ENCODE measurements at regions of chr14 and their contacts with region 1.

Region 1: DNA sequence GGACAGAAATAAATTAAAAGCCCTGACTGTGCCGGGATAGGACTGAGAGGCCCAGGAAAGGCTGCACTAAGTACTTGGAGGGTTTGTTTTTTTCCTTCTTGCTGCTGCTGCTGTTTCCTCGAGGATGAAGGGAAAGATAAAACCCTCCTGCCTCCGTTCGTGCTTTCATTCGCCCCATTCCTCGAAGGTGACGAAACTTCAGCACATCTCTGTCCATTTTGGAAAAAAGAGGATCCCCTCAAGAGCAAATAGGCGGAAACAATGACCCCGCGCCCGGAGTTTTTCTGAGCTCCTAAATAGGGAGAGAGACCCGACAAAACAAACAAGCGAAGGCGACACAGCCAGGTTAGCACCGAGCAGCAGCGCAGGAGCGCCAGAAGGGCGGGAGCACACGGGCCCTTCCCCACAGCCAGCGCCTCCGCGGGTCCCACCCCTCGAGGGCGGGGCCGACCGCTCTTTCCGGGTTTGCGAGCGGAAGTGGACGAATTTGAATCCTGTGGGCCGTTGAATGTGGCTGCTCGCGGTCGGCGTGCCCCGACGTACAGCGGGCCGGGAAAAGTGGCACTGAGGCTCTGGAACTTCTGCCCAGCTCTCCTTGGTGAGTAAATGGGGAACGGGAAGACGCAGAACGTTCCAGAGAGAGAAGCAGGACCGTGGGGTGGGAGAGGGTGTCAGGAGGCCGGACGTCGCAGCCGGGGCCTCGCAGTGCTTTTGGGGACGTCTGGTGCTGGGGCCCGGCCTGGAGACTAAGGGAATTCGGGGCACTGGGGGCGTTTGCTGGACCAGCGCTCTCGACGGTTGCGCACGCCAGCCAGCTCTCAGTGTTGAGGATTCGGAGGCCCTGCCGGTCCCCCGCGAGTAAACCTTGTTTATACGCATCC is at the start of gene G2E3:
- DNase-seq: peak; percentile 63 to 73
- ATAC-seq: peak; percentile 96 to 99
- H3K4me3 ChIP-seq: peak within 1 kb of the TSS; percentile 72 to 89 (median 82)
- H3K27ac ChIP-seq: peak within 1 kb of the TSS; percentile 63 to 81 (median 78)
- H3K4me1 ChIP-seq: peaks cover 14 to 17% of the 10 kb centered on the region in 2 donors
- H3K27me3 ChIP-seq: no peaks in the 10 kb centered on the region
- CTCF ChIP-seq: no peak
- POLR2A ChIP-seq: peak; percentile 41 to 49
- total RNA-seq, gene G2E3: 3.3 to 5.4 (median 4.4) TPM

Region 2: GRCh38 chr14:30597504-30597903 is 38.6 kb after region 1 on chr14:
- in situ Hi-C with region 1: no loop called
- intact Hi-C with region 1: no loop called
- DNase-seq: no peak
- ATAC-seq: no peak
- H3K4me3 ChIP-seq: no peak overlapping the region
- H3K27ac ChIP-seq: no peak overlapping the region
- H3K4me1 ChIP-seq: peaks cover 14 to 20% of the 10 kb centered on the region in 2 donors
- H3K27me3 ChIP-seq: no peaks in the 10 kb centered on the region
- CTCF ChIP-seq: no peak
- POLR2A ChIP-seq: no peak

Region 3: DNA sequence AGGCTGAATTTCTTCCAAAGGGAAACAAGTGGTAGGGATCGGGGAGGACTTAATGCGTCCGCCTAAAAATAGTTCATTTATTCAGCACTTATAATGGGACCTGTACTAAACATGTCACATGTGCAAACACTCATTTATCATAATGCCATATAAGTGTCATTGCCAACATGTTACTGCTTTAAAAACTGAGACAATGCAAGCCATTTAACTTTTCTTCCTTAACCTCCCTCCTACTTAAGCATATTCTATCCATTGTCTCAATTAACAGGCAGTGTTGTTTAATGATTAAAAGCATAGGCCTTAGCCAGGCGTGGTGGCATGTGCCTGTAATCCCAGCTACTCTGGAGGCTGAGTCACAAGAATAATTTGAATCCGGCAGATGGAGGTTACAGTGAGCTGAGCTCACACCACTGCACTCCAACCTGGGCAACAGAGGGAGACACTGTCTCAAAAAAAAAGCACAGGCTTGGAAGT is 49.7 kb after region 1 on chr14:
- in situ Hi-C with region 1: no loop called
- intact Hi-C with region 1: loop called (anchors 2 kb)
- DNase-seq: peak; percentile 13 to 44
- ATAC-seq: peak; percentile 96 to 97
- H3K4me3 ChIP-seq: no peak overlapping the region
- H3K27ac ChIP-seq: peak overlapping the region; percentile 65 to 77 (median 74)
- H3K4me1 ChIP-seq: peaks cover 3 to 16% of the 10 kb centered on the region in 2 donors
- H3K27me3 ChIP-seq: no peaks in the 10 kb centered on the region
- CTCF ChIP-seq: peak in 1 of 5 experiments; percentile 17
- POLR2A ChIP-seq: no peak

Region 4: DNA sequence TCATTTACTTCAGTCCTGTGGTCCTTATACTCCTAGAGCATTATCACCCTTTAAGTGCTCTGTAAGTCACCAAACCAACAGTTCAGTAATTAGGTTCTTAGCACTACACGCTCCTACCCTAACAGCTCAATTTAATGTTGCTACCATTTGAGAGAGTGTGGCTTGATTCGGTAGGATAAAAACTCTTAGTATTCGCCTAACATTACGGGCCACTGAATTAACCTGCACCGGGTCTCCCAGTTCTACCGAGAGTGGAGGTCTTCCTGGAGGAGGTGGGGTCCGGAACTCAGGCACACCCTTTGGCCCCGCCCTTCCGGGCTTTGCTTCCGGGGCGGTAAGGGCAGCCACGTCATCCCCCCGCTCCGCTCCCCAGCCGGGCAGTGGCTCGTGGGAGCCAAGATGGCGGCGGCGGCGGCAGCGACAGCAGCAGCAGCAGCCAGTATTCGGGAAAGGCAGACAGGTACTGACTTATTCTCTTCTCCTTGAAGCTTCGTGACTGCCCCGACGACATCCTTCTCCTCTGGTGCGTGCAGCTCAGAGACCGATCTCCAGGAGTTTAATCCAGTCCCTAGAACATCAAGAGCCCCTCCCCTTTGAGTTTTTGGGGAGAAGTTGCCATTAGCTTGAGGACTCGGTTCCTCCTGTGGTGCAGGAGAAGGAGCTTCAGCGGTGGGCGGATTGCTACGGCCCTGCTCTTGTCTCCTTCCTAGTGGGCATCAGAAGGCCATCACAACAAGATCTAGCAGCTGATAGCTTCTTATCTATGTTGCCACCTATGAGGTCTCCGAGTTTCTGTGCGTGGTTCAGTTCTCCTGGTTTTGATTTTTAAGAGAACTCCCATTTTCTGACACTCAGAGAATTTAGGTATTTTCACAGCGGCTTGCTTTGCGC is 63.3 kb after region 1 on chr14 and contains the start of gene SCFD1:
- in situ Hi-C with region 1: no loop called
- intact Hi-C with region 1: loop called (anchors 5 kb)
- DNase-seq: peak; percentile 85 to 92
- ATAC-seq: peak; percentile 97 to 98
- H3K4me3 ChIP-seq: peak within 1 kb of the TSS; percentile 80 to 89 (median 83)
- H3K27ac ChIP-seq: peak within 1 kb of the TSS; percentile 91 to 92 (median 91)
- H3K4me1 ChIP-seq: peaks cover 22 to 35% of the 10 kb centered on the region in 2 donors
- H3K27me3 ChIP-seq: no peaks in the 10 kb centered on the region
- CTCF ChIP-seq: no peak
- POLR2A ChIP-seq: peak; percentile 94 to 96
- total RNA-seq, gene SCFD1: 21.5 to 30.7 (median 28.2) TPM